ENCODE measurements at regions of chr11 and their contacts with region 1.

Region 1: DNA sequence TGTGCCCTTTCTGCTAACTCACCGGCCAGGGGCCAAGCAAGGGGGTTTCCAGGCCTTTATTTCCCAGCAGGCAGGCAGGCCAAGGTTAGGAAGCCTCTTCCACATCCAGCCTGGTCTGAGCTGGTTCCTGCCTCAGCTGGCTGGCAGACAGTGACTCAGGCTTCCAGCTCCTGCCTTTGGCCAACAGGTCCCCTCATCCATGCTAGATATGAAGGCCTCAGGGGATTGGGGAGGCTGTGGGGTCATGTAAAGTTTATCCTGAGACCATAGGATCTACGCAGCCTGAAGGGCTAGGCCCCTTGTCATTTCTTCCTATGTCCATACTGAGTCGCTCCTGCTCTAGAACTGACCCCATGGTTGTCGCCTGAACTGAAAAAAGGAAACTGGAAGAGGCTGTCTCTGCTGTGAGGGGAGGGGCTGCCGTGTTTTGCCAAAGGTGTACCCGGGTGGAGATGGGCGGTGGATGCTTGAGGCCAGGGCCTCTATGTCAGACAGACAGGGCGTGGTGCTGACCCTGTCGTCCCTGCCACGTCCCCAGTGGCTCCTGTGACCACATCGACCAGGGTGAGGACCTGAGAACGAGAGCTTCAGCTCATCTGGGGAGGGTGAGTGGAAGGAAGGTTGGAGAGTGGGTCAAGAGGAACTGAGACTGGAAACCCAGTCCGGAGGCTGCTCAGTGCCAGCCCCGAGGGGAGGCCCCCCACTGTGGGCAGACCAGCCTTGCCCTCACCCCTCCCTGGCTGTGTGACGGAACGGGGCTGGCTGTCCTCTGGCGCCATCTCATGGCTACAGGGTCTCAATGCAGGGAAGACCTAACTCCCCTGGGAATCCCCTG is 17.0 kb downstream of the P2RY6 start:
- DNase-seq: peak in 1 of 2 donors; percentile 48
- H3K4me3 ChIP-seq: peak overlapping the region; percentile 19 to 57 (median 27)
- H3K27ac ChIP-seq: peak overlapping the region in 1 of 2 donors; percentile 50
- H3K4me1 ChIP-seq: no peaks in the 10 kb centered on the region
- H3K27me3 ChIP-seq: no peaks in the 10 kb centered on the region
- CTCF ChIP-seq: peak; percentile 75 to 93 (median 90)
- POLR2A ChIP-seq: no peak

Region 2: DNA sequence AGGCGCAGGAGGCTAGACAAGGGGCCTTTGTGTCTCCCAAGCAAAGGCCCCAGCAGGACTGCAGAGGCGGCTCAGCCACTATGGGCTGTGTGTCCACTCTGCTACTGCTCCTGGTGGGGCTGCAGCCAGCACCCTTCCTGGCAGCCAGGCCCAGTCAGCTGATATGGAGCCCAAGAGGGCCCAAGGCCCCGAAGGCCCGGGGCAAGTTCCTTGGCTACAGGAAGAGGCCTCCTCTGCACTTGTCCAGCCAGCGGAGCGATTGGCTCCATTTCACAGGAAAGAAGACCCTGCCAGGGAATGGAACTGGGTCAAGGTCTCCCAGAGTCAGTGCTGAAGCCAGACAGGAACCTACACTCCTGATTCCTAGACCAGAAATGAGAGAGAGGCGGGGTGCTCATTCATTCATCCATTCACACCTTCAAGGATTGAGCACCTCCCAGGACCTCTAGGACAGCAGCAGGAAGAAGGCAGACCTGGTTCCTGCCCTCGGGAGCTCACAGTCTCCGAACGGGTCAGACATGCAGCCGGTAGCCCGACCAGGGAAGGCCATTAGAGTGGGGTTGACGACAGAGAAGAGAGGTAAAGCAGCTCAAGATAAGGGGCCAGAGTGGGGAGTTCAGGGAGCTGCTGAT is 71.8 kb before region 1 on chr11:
- intact Hi-C with region 1: no loop called
- DNase-seq: no peak
- H3K4me3 ChIP-seq: peak overlapping the region in 2 of 3 donors; percentile 56 to 70
- H3K27ac ChIP-seq: peak overlapping the region; percentile 67 to 68
- H3K4me1 ChIP-seq: peaks cover 0 to 4% of the 10 kb centered on the region in 2 donors
- H3K27me3 ChIP-seq: no peaks in the 10 kb centered on the region
- CTCF ChIP-seq: no peak
- POLR2A ChIP-seq: no peak

Region 3: GRCh38 chr11:73327812-73328364 is 38.8 kb after region 1 on chr11:
- intact Hi-C with region 1: loop called (anchors 1 kb)
- DNase-seq: no peak
- H3K4me3 ChIP-seq: no peak overlapping the region
- H3K27ac ChIP-seq: peak overlapping the region; percentile 41 to 71
- H3K4me1 ChIP-seq: peaks cover 11 to 33% of the 10 kb centered on the region in 2 donors
- H3K27me3 ChIP-seq: no peaks in the 10 kb centered on the region
- CTCF ChIP-seq: no peak
- POLR2A ChIP-seq: no peak

Region 4: DNA sequence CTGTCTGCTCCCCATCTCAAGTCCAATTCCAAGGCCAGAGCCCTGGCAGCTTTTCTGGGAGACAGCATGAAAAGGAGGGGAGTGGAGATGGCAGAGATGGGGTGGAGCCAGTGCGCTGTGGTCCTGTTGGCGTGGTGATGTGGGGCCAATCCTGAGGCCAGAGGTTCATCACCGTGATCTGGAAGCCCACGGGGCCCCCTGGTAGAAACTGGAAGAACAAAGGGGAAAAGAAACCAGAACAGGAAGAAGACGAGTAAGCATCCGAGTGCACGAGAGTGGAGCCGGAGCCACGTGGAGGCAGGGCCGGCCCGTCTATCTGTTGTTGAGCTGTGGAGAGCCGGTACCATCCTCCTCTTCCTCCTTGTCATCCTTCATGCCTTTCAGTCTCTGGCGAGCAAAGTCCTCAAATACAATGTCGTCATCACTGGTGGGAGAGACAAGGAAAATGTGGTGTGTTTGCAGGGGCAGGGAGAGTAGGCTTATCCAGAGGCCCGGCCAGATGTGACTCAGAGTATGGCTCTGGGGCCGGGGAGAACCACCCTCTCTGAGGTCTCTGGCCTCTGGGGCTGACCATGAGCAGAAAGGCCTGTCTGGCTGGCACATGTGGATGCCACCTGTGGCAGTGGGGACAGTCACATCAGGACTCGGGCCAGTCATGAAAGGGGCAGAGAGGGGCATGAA is 1976.9 kb after region 1 on chr11:
- intact Hi-C with region 1: loop called (anchors 5 kb)
- DNase-seq: no peak
- H3K4me3 ChIP-seq: no peak overlapping the region
- H3K27ac ChIP-seq: peak overlapping the region in 1 of 2 donors; percentile 25
- H3K4me1 ChIP-seq: no peaks in the 10 kb centered on the region
- H3K27me3 ChIP-seq: no peaks in the 10 kb centered on the region
- CTCF ChIP-seq: no peak
- POLR2A ChIP-seq: no peak